Calu3 (cell line): ENCODE measurements at regions of chr6 and their contacts with region 1.

Region 1: GRCh38 chr6:114740547-114740946 is 397.7 kb upstream of the HS3ST5 start:
- DNase-seq: peak; percentile 8
- H3K4me3 Mint-ChIP-seq: no peak overlapping the region
- H3K27ac Mint-ChIP-seq: no peak overlapping the region
- H3K4me1 Mint-ChIP-seq: no peaks in the 10 kb centered on the region
- H3K27me3 Mint-ChIP-seq: no peaks in the 10 kb centered on the region
- CTCF ChIP-seq: no peak

Region 2: GRCh38 chr6:114648847-114649246 is 91.7 kb before region 1 on chr6:
- CTCF ChIA-PET with region 1: no interaction called
- intact Hi-C with region 1: loop called (anchors 1 kb)
- DNase-seq: peak; percentile 4
- H3K4me3 Mint-ChIP-seq: peak overlapping the region; percentile 15
- H3K27ac Mint-ChIP-seq: peak overlapping the region; percentile 53
- H3K4me1 Mint-ChIP-seq: peaks cover 47% of the 10 kb centered on the region
- H3K27me3 Mint-ChIP-seq: no peaks in the 10 kb centered on the region
- CTCF ChIP-seq: no peak